Upper lobe of right lung (tissue), 1 donor: ENCODE measurements at regions of chr20 and their contacts with region 1.

Region 1: GRCh38 chr20:33301192-33301930 is 18.3 kb downstream of the BPIFB1 start:
- DNase-seq: no peak
- ATAC-seq: no peak
- H3K4me3 ChIP-seq: no peak overlapping the region
- H3K27ac ChIP-seq: no peak overlapping the region
- H3K4me1 ChIP-seq: no peaks in the 10 kb centered on the region
- H3K27me3 ChIP-seq: peaks cover 5% of the 10 kb centered on the region
- CTCF ChIP-seq: no peak

Region 2: GRCh38 chr20:32902456-32903420 is 398.6 kb before region 1 on chr20:
- intact Hi-C with region 1: loop called (anchors 10 kb)
- DNase-seq: peak; percentile 75
- ATAC-seq: peak; percentile 89
- H3K4me3 ChIP-seq: no peak overlapping the region
- H3K27ac ChIP-seq: no peak overlapping the region
- H3K4me1 ChIP-seq: no peaks in the 10 kb centered on the region
- H3K27me3 ChIP-seq: no peaks in the 10 kb centered on the region
- CTCF ChIP-seq: peak; percentile 90

Region 3: GRCh38 chr20:33217052-33217451 is 84.3 kb before region 1 on chr20 and contains the start of gene BPIFA3:
- intact Hi-C with region 1: no loop called
- DNase-seq: no peak
- ATAC-seq: no peak
- H3K4me3 ChIP-seq: no peak within 1 kb of the TSS
- H3K27ac ChIP-seq: no peak within 1 kb of the TSS
- H3K4me1 ChIP-seq: no peaks in the 10 kb centered on the region
- H3K27me3 ChIP-seq: peaks cover 9% of the 10 kb centered on the region
- CTCF ChIP-seq: no peak
- total RNA-seq, gene BPIFA3: not detected

Region 4: GRCh38 chr20:33351696-33352095 is 50.3 kb after region 1 on chr20:
- intact Hi-C with region 1: no loop called
- DNase-seq: peak; percentile 9
- ATAC-seq: no peak
- H3K4me3 ChIP-seq: no peak overlapping the region
- H3K27ac ChIP-seq: no peak overlapping the region
- H3K4me1 ChIP-seq: no peaks in the 10 kb centered on the region
- H3K27me3 ChIP-seq: no peaks in the 10 kb centered on the region
- CTCF ChIP-seq: no peak

Region 5: GRCh38 chr20:33521461-33521860 is 220.1 kb after region 1 on chr20:
- intact Hi-C with region 1: no loop called
- DNase-seq: no peak
- ATAC-seq: no peak
- H3K4me3 ChIP-seq: no peak overlapping the region
- H3K27ac ChIP-seq: no peak overlapping the region
- H3K4me1 ChIP-seq: peaks cover 5% of the 10 kb centered on the region
- H3K27me3 ChIP-seq: no peaks in the 10 kb centered on the region
- CTCF ChIP-seq: no peak